Endothelial cell of umbilical vein (primary cell): ENCODE measurements at regions of chr1 and their contacts with region 1.

Region 1: DNA sequence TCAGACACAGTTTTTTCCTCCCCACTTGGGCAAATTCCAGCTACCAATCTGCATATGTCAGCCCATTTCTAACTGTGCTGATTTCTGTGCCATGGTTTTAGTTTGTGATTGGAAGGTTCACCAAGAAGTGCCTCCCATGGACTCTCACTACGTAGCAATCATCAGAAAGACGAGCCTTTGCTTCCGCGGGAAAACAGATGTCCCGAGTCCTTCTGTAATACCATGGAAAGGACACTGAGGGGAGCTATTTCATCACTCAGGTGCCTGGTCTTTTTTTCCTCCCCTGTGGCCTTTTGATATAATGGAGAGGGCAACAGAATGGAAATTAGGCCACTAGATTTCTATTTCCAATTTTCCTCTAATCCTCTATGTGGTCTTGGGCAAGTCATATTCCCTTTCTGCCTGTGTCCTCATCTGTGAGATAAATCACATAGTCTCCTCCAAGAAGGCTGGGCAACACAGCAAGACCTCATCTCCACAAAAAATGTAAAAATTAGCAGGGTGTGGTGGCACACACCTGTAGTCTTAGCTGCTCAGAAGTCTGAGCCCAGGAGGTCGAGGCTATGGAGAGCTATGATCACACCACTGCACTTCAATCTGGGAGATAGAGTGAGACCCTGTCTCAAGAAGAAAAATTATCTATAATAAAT is 24.8 kb downstream of the LEMD1 start:
- DNase-seq: peak; percentile 35
- H3K4me3 ChIP-seq: no peak overlapping the region
- H3K27ac ChIP-seq: no peak overlapping the region
- H3K4me1 ChIP-seq: no peaks in the 10 kb centered on the region
- H3K27me3 ChIP-seq: peaks cover 8 to 19% of the 10 kb centered on the region in 2 experiments
- CTCF ChIP-seq: peak; percentile 52 to 54
- POLR2A ChIP-seq: no peak

Region 2: DNA sequence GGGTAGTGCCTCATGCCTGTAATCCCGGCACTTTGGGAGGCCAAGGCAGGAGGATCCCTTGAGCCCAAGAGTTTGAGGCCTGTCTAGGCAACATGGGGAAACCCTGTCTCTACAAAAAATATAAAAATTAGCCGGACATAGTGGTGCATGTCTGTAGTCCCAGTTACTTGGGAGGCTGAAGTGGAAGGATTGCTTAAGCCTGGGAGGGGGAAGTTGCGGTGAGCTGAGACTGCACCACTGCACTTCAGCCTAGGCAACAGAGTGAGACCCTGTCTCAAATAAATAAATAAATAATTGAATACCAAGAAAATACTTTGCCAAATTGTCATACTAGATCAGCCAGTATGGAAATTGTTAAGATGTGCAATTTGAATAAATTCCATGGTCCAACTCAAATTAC is 269.4 kb before region 1 on chr1:
- CTCF ChIA-PET with region 1: no interaction called
- POLR2A ChIA-PET with region 1: no interaction called
- dilution Hi-C with region 1: no loop called
- intact Hi-C with region 1: no loop called
- DNase-seq: no peak
- H3K4me3 ChIP-seq: no peak overlapping the region
- H3K27ac ChIP-seq: no peak overlapping the region
- H3K4me1 ChIP-seq: peaks cover 3% of the 10 kb centered on the region
- H3K27me3 ChIP-seq: no peaks in the 10 kb centered on the region
- CTCF ChIP-seq: no peak
- POLR2A ChIP-seq: no peak

Region 3: GRCh38 chr1:205227584-205228006 is 169.5 kb before region 1 on chr1 and contains the start of gene TMCC2:
- CTCF ChIA-PET with region 1: no interaction called
- POLR2A ChIA-PET with region 1: no interaction called
- dilution Hi-C with region 1: no loop called
- intact Hi-C with region 1: no loop called
- DNase-seq: peak; percentile 81
- H3K4me3 ChIP-seq: peak within 1 kb of the TSS; percentile 49 to 64 (median 60)
- H3K27ac ChIP-seq: no peak within 1 kb of the TSS
- H3K4me1 ChIP-seq: peaks cover 17% of the 10 kb centered on the region
- H3K27me3 ChIP-seq: peaks cover 17 to 36% of the 10 kb centered on the region in 2 experiments
- CTCF ChIP-seq: peak in 1 of 2 donors; percentile 6
- POLR2A ChIP-seq: no peak
- total RNA-seq, gene TMCC2: 2.0 and 2.1 TPM in 2 replicates

Region 4: GRCh38 chr1:205430696-205431305 is 33.7 kb after region 1 on chr1:
- CTCF ChIA-PET with region 1: interaction called, 10 read pairs
- POLR2A ChIA-PET with region 1: no interaction called
- dilution Hi-C with region 1: no loop called
- intact Hi-C with region 1: no loop called
- DNase-seq: peak; percentile 59
- H3K4me3 ChIP-seq: peak overlapping the region; percentile 18 to 51 (median 34)
- H3K27ac ChIP-seq: no peak overlapping the region
- H3K4me1 ChIP-seq: no peaks in the 10 kb centered on the region
- H3K27me3 ChIP-seq: peaks cover 12 to 19% of the 10 kb centered on the region in 2 experiments
- CTCF ChIP-seq: peak; percentile 67 to 79
- POLR2A ChIP-seq: no peak